ENCODE measurements at regions of chr3 and their contacts with region 1.

Region 1: GRCh38 chr3:16687217-16687616 is 82.0 kb upstream of the DAZL start:
- DNase-seq: no peak
- ATAC-seq: no peak
- H3K4me3 ChIP-seq: no peak overlapping the region
- H3K4me3 Mint-ChIP-seq: no peak overlapping the region
- H3K27ac ChIP-seq: no peak overlapping the region
- H3K27ac Mint-ChIP-seq: no peak overlapping the region
- H3K4me1 ChIP-seq: no peaks in the 10 kb centered on the region
- H3K4me1 Mint-ChIP-seq: peaks cover 0 to 3% (median 0%) of the 10 kb centered on the region in 7 donors
- H3K27me3 ChIP-seq: no peaks in the 10 kb centered on the region
- H3K27me3 Mint-ChIP-seq: peaks cover 0 to 4% (median 0%) of the 10 kb centered on the region in 5 donors

Region 2: GRCh38 chr3:16618721-16619120 is 68.5 kb before region 1 on chr3:
- CTCF ChIA-PET with region 1: no interaction called
- POLR2A ChIA-PET with region 1: no interaction called
- intact Hi-C with region 1: no loop called
- DNase-seq: no peak
- ATAC-seq: no peak
- H3K4me3 ChIP-seq: no peak overlapping the region
- H3K4me3 Mint-ChIP-seq: no peak overlapping the region
- H3K27ac ChIP-seq: no peak overlapping the region
- H3K27ac Mint-ChIP-seq: no peak overlapping the region
- H3K4me1 ChIP-seq: no peaks in the 10 kb centered on the region
- H3K4me1 Mint-ChIP-seq: no peaks in the 10 kb centered on the region
- H3K27me3 ChIP-seq: no peaks in the 10 kb centered on the region
- H3K27me3 Mint-ChIP-seq: peaks cover 0 to 16% (median 0%) of the 10 kb centered on the region in 5 donors

Region 3: GRCh38 chr3:16789344-16790120 is 102.3 kb after region 1 on chr3:
- CTCF ChIA-PET with region 1: no interaction called
- POLR2A ChIA-PET with region 1: no interaction called
- intact Hi-C with region 1: no loop called
- DNase-seq: no peak
- ATAC-seq: peak; percentile 86
- H3K4me3 ChIP-seq: no peak overlapping the region
- H3K4me3 Mint-ChIP-seq: no peak overlapping the region
- H3K27ac ChIP-seq: no peak overlapping the region
- H3K27ac Mint-ChIP-seq: no peak overlapping the region
- H3K4me1 ChIP-seq: peaks cover 0 to 17% of the 10 kb centered on the region in 2 donors
- H3K4me1 Mint-ChIP-seq: peaks cover 3 to 17% (median 7%) of the 10 kb centered on the region in 7 donors
- H3K27me3 ChIP-seq: no peaks in the 10 kb centered on the region
- H3K27me3 Mint-ChIP-seq: peaks cover 0 to 10% (median 0%) of the 10 kb centered on the region in 5 donors

Region 4: DNA sequence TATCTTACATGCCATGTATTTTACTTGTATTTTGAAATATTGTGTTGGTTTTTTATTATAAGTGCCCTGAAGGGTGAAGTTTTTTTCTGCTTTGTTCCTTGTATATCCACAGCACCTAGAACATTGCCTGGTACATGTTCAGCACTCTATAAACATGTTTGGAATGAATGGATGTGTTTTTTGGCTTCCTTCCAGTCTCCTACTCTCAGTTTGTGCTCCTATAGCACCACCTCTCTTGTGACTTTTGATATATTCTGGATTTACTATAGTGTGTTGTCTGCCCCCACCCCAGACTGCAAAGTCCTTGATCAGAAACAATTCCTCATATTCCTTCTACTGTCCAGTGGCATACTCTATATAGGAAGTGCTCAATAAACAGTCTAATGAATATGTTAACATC is 258.1 kb after region 1 on chr3:
- CTCF ChIA-PET with region 1: no interaction called
- POLR2A ChIA-PET with region 1: no interaction called
- intact Hi-C with region 1: no loop called
- DNase-seq: no peak
- ATAC-seq: no peak
- H3K4me3 ChIP-seq: no peak overlapping the region
- H3K4me3 Mint-ChIP-seq: peak overlapping the region in 1 of 10 donors; percentile 30
- H3K27ac ChIP-seq: no peak overlapping the region
- H3K27ac Mint-ChIP-seq: peak overlapping the region in 2 of 9 donors; percentile 8 to 30
- H3K4me1 ChIP-seq: peaks cover 40 to 42% of the 10 kb centered on the region in 2 donors
- H3K4me1 Mint-ChIP-seq: peaks cover 36 to 87% (median 79%) of the 10 kb centered on the region in 7 donors
- H3K27me3 ChIP-seq: no peaks in the 10 kb centered on the region
- H3K27me3 Mint-ChIP-seq: no peaks in the 10 kb centered on the region

Region 5: GRCh38 chr3:17227472-17227871 is 540.3 kb after region 1 on chr3:
- CTCF ChIA-PET with region 1: interaction called, 10 read pairs
- POLR2A ChIA-PET with region 1: no interaction called
- intact Hi-C with region 1: no loop called
- DNase-seq: no peak
- ATAC-seq: no peak
- H3K4me3 ChIP-seq: no peak overlapping the region
- H3K4me3 Mint-ChIP-seq: no peak overlapping the region
- H3K27ac ChIP-seq: no peak overlapping the region
- H3K27ac Mint-ChIP-seq: no peak overlapping the region
- H3K4me1 ChIP-seq: no peaks in the 10 kb centered on the region
- H3K4me1 Mint-ChIP-seq: peaks cover 0 to 10% (median 0%) of the 10 kb centered on the region in 7 donors
- H3K27me3 ChIP-seq: no peaks in the 10 kb centered on the region
- H3K27me3 Mint-ChIP-seq: no peaks in the 10 kb centered on the region

Region 6: GRCh38 chr3:17949101-17949500 is 1261.9 kb after region 1 on chr3:
- CTCF ChIA-PET with region 1: no interaction called
- POLR2A ChIA-PET with region 1: no interaction called
- intact Hi-C with region 1: no loop called
- DNase-seq: no peak
- ATAC-seq: no peak
- H3K4me3 ChIP-seq: no peak overlapping the region
- H3K4me3 Mint-ChIP-seq: no peak overlapping the region
- H3K27ac ChIP-seq: no peak overlapping the region
- H3K27ac Mint-ChIP-seq: peak overlapping the region in 1 of 9 donors; percentile 9
- H3K4me1 ChIP-seq: no peaks in the 10 kb centered on the region
- H3K4me1 Mint-ChIP-seq: no peaks in the 10 kb centered on the region
- H3K27me3 ChIP-seq: no peaks in the 10 kb centered on the region
- H3K27me3 Mint-ChIP-seq: peaks cover 4 to 33% (median 16%) of the 10 kb centered on the region in 5 donors

Measured in naive thymus-derived CD4-positive, alpha-beta T cell (primary cell).